ENCODE measurements at regions of chr6 and their contacts with region 1.

Region 1: GRCh38 chr6:148471624-148472159 is 129.1 kb downstream of the SASH1 start:
- DNase-seq: no peak
- ATAC-seq: no peak
- H3K4me3 ChIP-seq: no peak overlapping the region
- H3K27ac ChIP-seq: no peak overlapping the region
- H3K4me1 ChIP-seq: no peaks in the 10 kb centered on the region
- H3K27me3 ChIP-seq: no peaks in the 10 kb centered on the region
- CTCF ChIP-seq: no peak
- EP300 ChIP-seq: no peak
- POLR2A ChIP-seq: no peak
- RAD21 ChIP-seq: no peak

Region 2: GRCh38 chr6:147390909-147391536 is 1080.7 kb before region 1 on chr6:
- CTCF ChIA-PET with region 1: no interaction called
- POLR2A ChIA-PET with region 1: no interaction called
- in situ Hi-C with region 1: no loop called
- intact Hi-C with region 1: loop called (anchors 10 kb)
- DNase-seq: peak; percentile 27
- ATAC-seq: 0 out of 3 replicates have a peak, but pooled peaks have one; percentile 31
- H3K4me3 ChIP-seq: no peak overlapping the region; a peak in 1 of 6 replicates
- H3K27ac ChIP-seq: no peak overlapping the region
- H3K4me1 ChIP-seq: peaks cover 8% of the 10 kb centered on the region
- H3K27me3 ChIP-seq: 0 out of 5 replicates have a peak, but pooled peaks cover 0 to under 1% of the 10 kb centered on the region in 2 experiments
- CTCF ChIP-seq: peak; percentile 47
- EP300 ChIP-seq: no peak
- POLR2A ChIP-seq: no peak
- RAD21 ChIP-seq: no peak

Region 3: GRCh38 chr6:148349466-148349865 is 122.2 kb before region 1 on chr6:
- CTCF ChIA-PET with region 1: no interaction called
- POLR2A ChIA-PET with region 1: no interaction called
- in situ Hi-C with region 1: no loop called
- intact Hi-C with region 1: no loop called
- DNase-seq: no peak
- ATAC-seq: peak; percentile 55; the same call in 2 of the 3 replicates
- H3K4me3 ChIP-seq: no peak overlapping the region
- H3K27ac ChIP-seq: no peak overlapping the region
- H3K4me1 ChIP-seq: peaks cover 27% of the 10 kb centered on the region
- H3K27me3 ChIP-seq: no peaks in the 10 kb centered on the region
- CTCF ChIP-seq: no peak
- EP300 ChIP-seq: no peak
- POLR2A ChIP-seq: no peak
- RAD21 ChIP-seq: no peak

Region 4: DNA sequence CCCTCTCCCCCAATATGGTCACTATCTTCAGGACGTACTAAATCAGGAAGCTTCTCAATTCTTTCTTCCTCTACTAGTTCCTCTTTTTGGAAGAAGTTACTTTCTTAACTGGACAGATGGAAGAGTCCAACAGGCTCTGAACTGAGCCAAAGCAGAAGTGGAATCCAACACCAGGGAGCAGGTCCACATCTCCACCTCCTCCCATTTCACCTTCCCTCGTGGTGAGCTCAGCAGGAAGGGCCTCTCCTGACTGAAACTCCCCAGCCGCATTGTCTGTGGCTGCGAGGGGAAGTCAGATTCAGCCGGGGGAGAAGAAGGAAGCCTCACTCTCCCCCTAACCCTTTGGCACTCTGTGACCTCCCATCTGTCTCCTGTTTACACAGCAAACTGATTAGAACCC is 211.3 kb after region 1 on chr6:
- CTCF ChIA-PET with region 1: no interaction called
- POLR2A ChIA-PET with region 1: no interaction called
- in situ Hi-C with region 1: no loop called
- intact Hi-C with region 1: no loop called
- DNase-seq: no peak
- ATAC-seq: no peak
- H3K4me3 ChIP-seq: no peak overlapping the region
- H3K27ac ChIP-seq: no peak overlapping the region
- H3K4me1 ChIP-seq: no peaks in the 10 kb centered on the region
- H3K27me3 ChIP-seq: no peaks in the 10 kb centered on the region
- CTCF ChIP-seq: no peak
- EP300 ChIP-seq: no peak
- POLR2A ChIP-seq: no peak
- RAD21 ChIP-seq: no peak

Region 5: GRCh38 chr6:148700741-148701311 is 229.1 kb after region 1 on chr6:
- CTCF ChIA-PET with region 1: no interaction called
- POLR2A ChIA-PET with region 1: no interaction called
- in situ Hi-C with region 1: no loop called
- intact Hi-C with region 1: no loop called
- DNase-seq: no peak
- ATAC-seq: peak; percentile 84
- H3K4me3 ChIP-seq: peak overlapping the region in 2 of 3 experiments; percentile 29 to 43; a peak in 3 of 6 replicates
- H3K27ac ChIP-seq: no peak overlapping the region
- H3K4me1 ChIP-seq: no peaks in the 10 kb centered on the region
- H3K27me3 ChIP-seq: no peaks in the 10 kb centered on the region; a peak in 1 of 5 replicates
- CTCF ChIP-seq: no peak
- EP300 ChIP-seq: no peak
- POLR2A ChIP-seq: no peak
- RAD21 ChIP-seq: no peak

Measured in HepG2 (cell line).